A673 (cell line): ENCODE measurements at regions of chr5 and their contacts with region 1.

Region 1: DNA sequence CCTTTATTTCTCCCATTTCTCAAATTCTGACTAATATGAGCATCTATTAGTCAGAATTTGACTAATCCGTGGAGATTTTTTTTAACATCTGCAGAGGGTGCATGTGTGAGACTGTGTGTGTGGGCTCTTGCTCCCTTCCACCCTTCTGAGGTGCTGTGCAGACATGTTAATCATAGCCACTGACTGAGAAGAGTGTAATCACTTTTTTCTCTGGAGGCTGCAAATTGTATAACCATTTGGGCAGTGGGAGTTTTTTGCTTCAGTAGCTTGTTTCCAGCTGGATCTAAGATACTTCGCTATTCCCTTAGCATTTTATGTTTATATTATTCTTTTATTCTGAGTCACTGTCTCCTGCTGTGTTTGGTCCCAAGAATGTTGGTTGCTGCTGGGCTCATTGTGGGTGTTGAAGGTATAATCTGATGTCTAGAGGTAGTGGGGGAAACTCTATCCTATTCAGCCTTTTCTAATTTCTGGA is 66.2 kb downstream of the ARHGEF28 start:
- DNase-seq: peak; percentile 79
- H3K4me3 ChIP-seq: no peak overlapping the region
- H3K27ac ChIP-seq: no peak overlapping the region
- H3K4me1 ChIP-seq: no peaks in the 10 kb centered on the region
- H3K27me3 ChIP-seq: no peaks in the 10 kb centered on the region
- CTCF ChIP-seq: no peak

Region 2: DNA sequence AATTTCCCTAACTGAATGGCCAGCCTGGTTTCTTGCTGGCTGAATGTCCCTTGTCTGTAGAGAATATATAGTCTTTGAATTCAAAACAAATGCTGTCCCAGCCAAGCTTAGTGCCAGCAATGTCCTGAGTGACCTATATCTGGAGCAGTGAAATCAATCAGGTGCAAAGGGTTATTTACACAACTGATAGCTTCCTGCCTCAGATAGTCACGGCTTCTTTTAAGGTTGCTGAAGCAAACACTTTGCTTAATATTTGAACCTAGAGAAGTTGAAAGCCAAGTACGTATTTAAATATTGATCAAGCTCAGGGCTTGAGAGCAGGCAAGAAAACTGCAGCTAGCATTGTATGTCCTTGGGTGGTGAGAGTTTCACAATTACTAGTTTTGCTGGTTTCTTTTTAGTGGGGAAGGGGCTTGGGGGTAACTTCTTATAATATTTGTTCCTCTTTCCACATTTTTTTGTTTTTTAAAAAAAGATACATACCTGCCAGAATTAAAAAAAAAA is 68.2 kb before region 1 on chr5:
- CTCF ChIA-PET with region 1: no interaction called
- POLR2A ChIA-PET with region 1: interaction called, 10 read pairs
- intact Hi-C with region 1: no loop called
- DNase-seq: no peak
- H3K4me3 ChIP-seq: no peak overlapping the region
- H3K27ac ChIP-seq: no peak overlapping the region
- H3K4me1 ChIP-seq: no peaks in the 10 kb centered on the region
- H3K27me3 ChIP-seq: peaks cover 28% of the 10 kb centered on the region
- CTCF ChIP-seq: no peak

Region 3: DNA sequence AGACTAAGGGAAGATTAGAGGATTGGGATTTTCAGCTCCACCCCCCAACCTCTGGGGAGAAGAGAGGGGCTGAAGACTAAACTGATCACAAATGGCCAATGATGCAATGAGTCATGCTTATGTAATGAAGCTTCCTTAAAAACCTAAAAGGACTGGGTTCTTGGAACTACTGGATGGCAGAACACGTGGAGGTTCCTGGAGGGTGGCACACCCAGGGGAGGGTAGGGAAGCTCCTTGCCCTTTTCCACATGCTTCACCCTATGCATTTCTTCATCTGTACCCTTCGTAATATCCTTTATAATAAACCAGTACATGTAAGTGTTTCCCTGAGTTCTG is 17.6 kb before region 1 on chr5:
- CTCF ChIA-PET with region 1: no interaction called
- POLR2A ChIA-PET with region 1: interaction called, 10 read pairs
- intact Hi-C with region 1: no loop called
- DNase-seq: no peak
- H3K4me3 ChIP-seq: no peak overlapping the region
- H3K27ac ChIP-seq: no peak overlapping the region
- H3K4me1 ChIP-seq: peaks cover 6% of the 10 kb centered on the region
- H3K27me3 ChIP-seq: no peaks in the 10 kb centered on the region
- CTCF ChIP-seq: no peak

Region 4: GRCh38 chr5:73783828-73784227 is 91.6 kb after region 1 on chr5:
- CTCF ChIA-PET with region 1: no interaction called
- POLR2A ChIA-PET with region 1: no interaction called
- intact Hi-C with region 1: no loop called
- DNase-seq: peak; percentile 39
- H3K4me3 ChIP-seq: no peak overlapping the region
- H3K27ac ChIP-seq: no peak overlapping the region
- H3K4me1 ChIP-seq: no peaks in the 10 kb centered on the region
- H3K27me3 ChIP-seq: peaks cover 6% of the 10 kb centered on the region
- CTCF ChIP-seq: peak; percentile 42; the same call in 1 of the 2 replicates